CD8-positive, alpha-beta T cell (primary cell): ENCODE measurements at regions of chr16 and their contacts with region 1.

Region 1: GRCh38 chr16:11535471-11535870 is 51.2 kb downstream of the LITAF start:
- DNase-seq: no peak
- ATAC-seq: no peak
- H3K4me3 ChIP-seq: no peak overlapping the region
- H3K4me3 Mint-ChIP-seq: no peak overlapping the region
- H3K27ac ChIP-seq: no peak overlapping the region
- H3K27ac Mint-ChIP-seq: no peak overlapping the region
- H3K4me1 ChIP-seq: no peaks in the 10 kb centered on the region
- H3K4me1 Mint-ChIP-seq: peaks cover 19% of the 10 kb centered on the region
- H3K27me3 ChIP-seq: no peaks in the 10 kb centered on the region
- H3K27me3 Mint-ChIP-seq: no peaks in the 10 kb centered on the region
- CTCF ChIP-seq: no peak

Region 2: DNA sequence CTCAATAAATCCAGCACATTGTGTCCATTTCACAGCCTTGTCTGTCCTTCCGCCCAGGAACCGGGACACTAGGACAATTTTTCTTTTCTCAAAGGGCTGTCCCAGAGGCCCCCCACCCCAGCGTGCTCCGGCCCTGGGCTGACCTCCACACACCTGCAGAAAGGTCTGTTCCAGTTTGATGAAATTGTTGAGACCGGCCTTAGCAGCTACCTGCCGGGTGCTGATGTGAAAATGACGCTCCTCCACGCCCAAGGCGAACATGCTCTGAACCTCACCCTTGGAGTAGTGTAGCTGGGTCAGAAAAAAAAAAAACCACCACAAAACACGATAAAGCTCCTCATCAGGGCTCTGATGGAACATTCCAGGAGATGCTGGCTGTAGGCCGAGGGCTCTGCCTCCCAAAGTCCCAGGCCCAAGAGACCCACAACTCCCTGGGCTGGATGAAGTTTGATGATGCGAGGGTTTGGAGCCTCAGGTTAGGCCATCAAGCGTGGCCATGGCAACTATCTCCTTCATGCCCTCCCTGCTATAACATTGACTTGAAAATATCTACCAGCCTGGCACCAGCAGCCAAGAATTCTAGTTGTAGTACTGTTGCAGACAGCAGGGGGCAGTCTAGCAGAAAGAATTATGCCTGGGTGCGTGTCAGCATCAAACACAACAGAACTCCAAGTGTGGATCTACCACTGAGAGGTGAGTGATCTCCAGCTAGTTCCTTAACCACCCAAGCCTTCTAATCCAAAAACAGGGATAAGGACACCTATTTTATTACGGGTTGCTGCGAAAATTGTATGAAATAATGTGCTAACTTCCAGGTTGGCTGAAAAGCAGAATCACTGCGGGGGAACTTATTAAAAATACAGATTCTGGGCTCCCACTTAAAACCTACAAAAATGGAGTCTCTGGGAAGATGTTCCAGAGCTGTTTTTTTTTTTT is 128.2 kb before region 1 on chr16:
- CTCF ChIA-PET with region 1: interaction called, 14 read pairs
- POLR2A ChIA-PET with region 1: no interaction called
- intact Hi-C with region 1: loop called (anchors 2 to 5 kb)
- DNase-seq: peak; percentile 37 to 78 (median 61)
- ATAC-seq: peak; percentile 82
- H3K4me3 ChIP-seq: no peak overlapping the region
- H3K4me3 Mint-ChIP-seq: no peak overlapping the region
- H3K27ac ChIP-seq: no peak overlapping the region
- H3K27ac Mint-ChIP-seq: no peak overlapping the region
- H3K4me1 ChIP-seq: no peaks in the 10 kb centered on the region
- H3K4me1 Mint-ChIP-seq: no peaks in the 10 kb centered on the region
- H3K27me3 ChIP-seq: no peaks in the 10 kb centered on the region
- H3K27me3 Mint-ChIP-seq: no peaks in the 10 kb centered on the region
- CTCF ChIP-seq: peak; percentile 57

Region 3: DNA sequence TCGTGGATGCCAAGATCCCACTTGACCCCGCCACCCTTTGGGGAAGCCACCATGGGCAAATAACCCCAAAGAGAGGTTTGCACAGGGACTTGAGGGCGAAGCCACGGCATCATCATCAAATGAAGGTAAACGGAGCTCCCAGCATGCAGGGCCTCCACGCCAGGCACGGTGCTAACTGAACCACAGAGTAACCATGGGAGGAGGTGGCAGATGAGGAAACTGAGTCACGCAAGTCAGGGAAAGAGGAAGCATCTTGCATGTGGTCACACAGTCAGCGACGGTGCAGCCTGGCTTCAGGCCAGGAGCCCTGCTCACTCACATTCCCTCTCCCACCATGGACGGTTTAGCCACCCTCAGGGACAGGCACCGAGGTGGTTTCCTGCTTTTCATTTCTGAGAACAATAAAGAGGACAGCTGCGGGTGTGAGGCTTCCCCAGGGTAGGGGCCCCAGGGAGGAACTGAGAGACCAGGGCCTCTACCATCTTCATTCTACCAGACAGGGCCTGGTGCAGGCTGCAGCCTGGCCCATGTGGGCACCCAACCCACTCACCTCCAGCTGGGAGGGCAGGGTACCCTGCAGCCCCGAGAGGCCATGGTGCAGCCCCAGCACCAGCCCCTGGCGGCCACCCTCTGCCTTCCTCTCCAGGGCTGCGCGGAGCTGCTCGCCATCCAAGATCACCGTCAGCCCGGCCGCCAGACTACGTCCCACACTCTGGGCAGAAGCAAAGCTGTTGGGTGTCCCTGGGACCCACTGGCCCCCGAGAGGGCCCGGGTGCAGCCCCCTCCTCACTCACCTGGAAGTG is 112.0 kb before region 1 on chr16:
- CTCF ChIA-PET with region 1: no interaction called
- POLR2A ChIA-PET with region 1: no interaction called
- intact Hi-C with region 1: no loop called
- DNase-seq: no peak
- ATAC-seq: no peak
- H3K4me3 ChIP-seq: no peak overlapping the region
- H3K4me3 Mint-ChIP-seq: no peak overlapping the region
- H3K27ac ChIP-seq: no peak overlapping the region
- H3K27ac Mint-ChIP-seq: no peak overlapping the region
- H3K4me1 ChIP-seq: no peaks in the 10 kb centered on the region
- H3K4me1 Mint-ChIP-seq: no peaks in the 10 kb centered on the region
- H3K27me3 ChIP-seq: no peaks in the 10 kb centered on the region
- H3K27me3 Mint-ChIP-seq: no peaks in the 10 kb centered on the region
- CTCF ChIP-seq: no peak

Region 4: DNA sequence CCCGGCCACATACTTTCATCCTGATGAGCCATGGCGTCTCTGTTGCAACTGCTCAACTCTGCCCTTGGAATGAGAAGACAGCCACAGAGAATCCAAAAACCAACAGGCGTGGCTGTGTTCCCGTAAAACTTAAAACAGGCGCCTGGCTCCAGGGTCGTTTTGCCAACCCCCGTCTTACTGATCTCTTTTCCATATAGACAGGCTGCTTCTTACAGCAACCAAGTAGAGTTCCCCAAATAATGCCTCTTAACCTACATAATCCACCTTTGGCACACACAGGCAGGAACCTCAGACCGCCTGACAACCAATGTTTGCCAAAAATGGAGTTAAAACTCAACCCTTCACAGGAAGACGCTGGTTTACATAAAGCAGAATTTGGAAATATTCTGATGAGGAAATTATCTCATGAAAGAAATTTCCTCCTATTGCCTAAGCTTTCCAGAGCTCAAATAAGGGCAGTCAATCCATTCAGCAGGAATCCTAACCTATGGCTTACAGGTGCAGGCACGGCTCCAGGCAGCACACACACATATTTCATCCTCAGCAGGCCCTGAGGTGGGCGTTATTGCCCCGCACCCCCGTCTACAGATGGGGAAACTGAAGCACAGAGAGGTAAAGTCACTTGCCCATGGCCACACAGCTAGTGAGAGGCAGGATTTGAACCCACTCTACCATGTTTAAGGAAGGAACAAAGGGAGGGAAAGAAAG is 15.5 kb after region 1 on chr16:
- CTCF ChIA-PET with region 1: interaction called, 26 read pairs
- POLR2A ChIA-PET with region 1: interaction called, 3 read pairs
- intact Hi-C with region 1: no loop called
- DNase-seq: no peak
- ATAC-seq: no peak
- H3K4me3 ChIP-seq: no peak overlapping the region
- H3K4me3 Mint-ChIP-seq: no peak overlapping the region
- H3K27ac ChIP-seq: peak overlapping the region in 1 of 2 experiments; percentile 1
- H3K27ac Mint-ChIP-seq: peak overlapping the region; percentile 57
- H3K4me1 ChIP-seq: peaks cover 3% of the 10 kb centered on the region
- H3K4me1 Mint-ChIP-seq: peaks cover 25% of the 10 kb centered on the region
- H3K27me3 ChIP-seq: no peaks in the 10 kb centered on the region
- H3K27me3 Mint-ChIP-seq: no peaks in the 10 kb centered on the region
- CTCF ChIP-seq: no peak

Region 5: GRCh38 chr16:11586856-11587642 is 51.6 kb after region 1 on chr16 and contains the start of gene LITAF:
- CTCF ChIA-PET with region 1: interaction called, 47 read pairs
- POLR2A ChIA-PET with region 1: interaction called, 3 read pairs
- intact Hi-C with region 1: loop called (anchors 2 kb)
- DNase-seq: peak in 8 of 9 experiments; percentile 34 to 82 (median 67)
- ATAC-seq: peak; percentile 59
- H3K4me3 ChIP-seq: peak within 1 kb of the TSS; percentile 71 to 93
- H3K4me3 Mint-ChIP-seq: peak within 1 kb of the TSS; percentile 97
- H3K27ac ChIP-seq: peak within 1 kb of the TSS; percentile 72 to 89
- H3K27ac Mint-ChIP-seq: peak within 1 kb of the TSS; percentile 98
- H3K4me1 ChIP-seq: peaks cover 33% of the 10 kb centered on the region
- H3K4me1 Mint-ChIP-seq: peaks cover 41% of the 10 kb centered on the region
- H3K27me3 ChIP-seq: no peaks in the 10 kb centered on the region
- H3K27me3 Mint-ChIP-seq: no peaks in the 10 kb centered on the region
- CTCF ChIP-seq: no peak
- total RNA-seq, gene LITAF: 543 TPM

Region 6: DNA sequence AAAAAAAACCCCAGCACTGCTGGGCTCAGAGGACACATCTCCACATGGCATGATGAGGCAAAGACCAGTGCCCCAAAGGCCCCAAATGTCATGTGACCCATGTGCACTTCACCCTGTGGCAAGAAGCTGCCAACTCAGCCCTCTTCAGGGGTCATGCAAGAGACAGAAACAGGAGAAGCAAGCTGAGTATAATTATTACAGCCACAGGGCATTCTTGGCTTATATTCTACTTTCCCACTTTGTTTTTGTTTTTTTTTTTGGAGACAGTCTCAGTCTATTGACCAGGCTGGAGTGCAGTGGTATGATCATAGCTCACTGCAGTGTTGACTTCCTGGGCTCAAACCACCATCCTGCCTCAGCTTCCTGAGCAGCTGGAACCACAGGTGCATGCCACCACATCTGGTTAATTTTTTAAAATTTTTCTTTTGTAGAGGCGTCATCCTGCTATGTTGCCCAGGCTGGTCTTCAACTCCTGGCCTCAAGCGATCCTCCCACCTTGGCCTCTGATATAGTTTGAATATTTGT is 83.9 kb after region 1 on chr16:
- CTCF ChIA-PET with region 1: interaction called, 16 read pairs
- POLR2A ChIA-PET with region 1: interaction called, 7 read pairs
- intact Hi-C with region 1: loop called in 1 of 2 experiments (anchors 5 kb)
- DNase-seq: peak in 7 of 9 experiments; percentile 28 to 75 (median 48)
- ATAC-seq: peak; percentile 25
- H3K4me3 ChIP-seq: no peak overlapping the region
- H3K4me3 Mint-ChIP-seq: peak overlapping the region; percentile 58
- H3K27ac ChIP-seq: peak overlapping the region; percentile 40 to 86
- H3K27ac Mint-ChIP-seq: peak overlapping the region; percentile 98
- H3K4me1 ChIP-seq: peaks cover 77% of the 10 kb centered on the region
- H3K4me1 Mint-ChIP-seq: peaks cover 70% of the 10 kb centered on the region
- H3K27me3 ChIP-seq: no peaks in the 10 kb centered on the region
- H3K27me3 Mint-ChIP-seq: no peaks in the 10 kb centered on the region
- CTCF ChIP-seq: no peak

Region 7: GRCh38 chr16:11677451-11677951 is 142.0 kb after region 1 on chr16:
- CTCF ChIA-PET with region 1: interaction called, 10 read pairs
- POLR2A ChIA-PET with region 1: no interaction called
- intact Hi-C with region 1: no loop called
- DNase-seq: no peak
- ATAC-seq: no peak
- H3K4me3 ChIP-seq: no peak overlapping the region
- H3K4me3 Mint-ChIP-seq: no peak overlapping the region
- H3K27ac ChIP-seq: no peak overlapping the region
- H3K27ac Mint-ChIP-seq: peak overlapping the region; percentile 73
- H3K4me1 ChIP-seq: peaks cover 44% of the 10 kb centered on the region
- H3K4me1 Mint-ChIP-seq: peaks cover 75% of the 10 kb centered on the region
- H3K27me3 ChIP-seq: no peaks in the 10 kb centered on the region
- H3K27me3 Mint-ChIP-seq: no peaks in the 10 kb centered on the region
- CTCF ChIP-seq: no peak

Region 8: GRCh38 chr16:11806721-11807120 is 271.2 kb after region 1 on chr16:
- CTCF ChIA-PET with region 1: no interaction called
- POLR2A ChIA-PET with region 1: no interaction called
- intact Hi-C with region 1: loop called in 1 of 2 experiments (anchors 5 kb)
- DNase-seq: no peak
- ATAC-seq: no peak
- H3K4me3 ChIP-seq: no peak overlapping the region
- H3K4me3 Mint-ChIP-seq: no peak overlapping the region
- H3K27ac ChIP-seq: no peak overlapping the region
- H3K27ac Mint-ChIP-seq: no peak overlapping the region
- H3K4me1 ChIP-seq: no peaks in the 10 kb centered on the region
- H3K4me1 Mint-ChIP-seq: peaks cover 7% of the 10 kb centered on the region
- H3K27me3 ChIP-seq: no peaks in the 10 kb centered on the region
- H3K27me3 Mint-ChIP-seq: no peaks in the 10 kb centered on the region
- CTCF ChIP-seq: no peak